Activated CD4-positive, alpha-beta T cell treated with anti-CD3 and anti-CD28 coated beads, Interleukin-2, amount 10 ng/mL, durations not matched to agents 24 days and 14 days (primary cell): ENCODE measurements at regions of chr6 and their contacts with region 1.

Region 1: GRCh38 chr6:13336553-13336952 is 8.2 kb upstream of the TBC1D7 start:
- DNase-seq: peak; percentile 93
- H3K4me3 Mint-ChIP-seq: no peak overlapping the region
- H3K27ac Mint-ChIP-seq: no peak overlapping the region
- H3K4me1 Mint-ChIP-seq: peaks cover 34% of the 10 kb centered on the region
- H3K27me3 Mint-ChIP-seq: no peaks in the 10 kb centered on the region

Region 2: DNA sequence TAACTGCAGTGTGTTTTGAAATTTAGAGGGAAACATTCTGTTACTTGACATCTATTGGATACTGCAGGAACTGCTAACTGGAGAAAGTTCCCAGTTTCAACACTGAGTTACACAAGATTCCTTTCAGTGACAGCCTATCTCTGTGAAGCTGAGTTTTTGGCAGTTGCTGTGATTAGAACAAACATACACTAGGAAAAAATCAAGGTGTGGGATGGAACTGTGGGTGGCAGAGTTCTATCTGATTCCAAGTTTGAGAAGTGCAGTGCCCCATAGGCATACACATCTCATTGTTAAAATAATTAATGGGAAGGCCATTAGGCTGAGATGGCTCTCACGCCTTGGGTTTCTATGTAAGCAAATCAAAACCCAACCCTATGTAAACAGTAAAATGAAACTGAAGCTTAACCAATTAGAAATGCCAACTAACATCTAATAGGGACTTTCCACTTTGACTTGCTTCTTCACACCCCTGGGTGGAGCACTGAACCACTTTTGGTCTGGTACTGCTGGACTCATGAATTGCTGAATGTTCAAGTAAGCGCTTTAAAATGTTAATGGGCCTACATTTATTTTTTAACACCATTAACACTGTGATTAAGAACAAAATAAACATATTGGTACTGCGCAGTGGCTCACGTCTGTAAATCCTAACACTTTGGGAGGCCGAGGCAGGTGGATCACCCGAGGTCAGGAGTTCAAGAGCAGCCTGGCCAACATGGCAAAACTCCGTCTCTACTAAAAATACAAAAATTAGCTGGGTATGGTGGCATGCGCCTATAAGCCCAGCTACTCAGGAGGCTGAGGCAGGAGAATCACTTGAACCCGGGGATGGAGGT is 47.0 kb after region 1 on chr6:
- intact Hi-C with region 1: loop called (anchors 5 kb)
- DNase-seq: peak; percentile 73
- H3K4me3 Mint-ChIP-seq: peak overlapping the region; percentile 19
- H3K27ac Mint-ChIP-seq: no peak overlapping the region
- H3K4me1 Mint-ChIP-seq: peaks cover 18% of the 10 kb centered on the region
- H3K27me3 Mint-ChIP-seq: no peaks in the 10 kb centered on the region

Region 3: DNA sequence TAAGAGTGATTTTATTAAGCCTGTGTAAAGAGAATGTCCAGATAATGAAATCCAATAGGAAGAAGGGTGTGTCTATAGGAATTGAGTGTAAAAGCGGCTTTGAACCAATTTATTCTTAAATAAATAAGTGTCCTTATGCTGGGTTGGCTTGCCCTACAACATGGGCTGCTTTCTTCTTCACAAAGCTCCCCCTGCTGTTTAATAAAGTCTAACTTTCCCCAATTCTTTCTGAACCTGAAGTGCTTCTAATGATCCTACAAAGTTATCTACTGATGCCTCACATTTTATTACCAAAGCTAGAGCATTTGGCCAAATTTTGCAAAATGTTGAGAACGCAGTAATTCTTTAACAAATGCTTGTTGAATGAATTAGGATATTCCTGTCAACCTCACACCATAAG is 201.5 kb after region 1 on chr6:
- intact Hi-C with region 1: loop called (anchors 1 kb)
- DNase-seq: no peak
- H3K4me3 Mint-ChIP-seq: no peak overlapping the region
- H3K27ac Mint-ChIP-seq: no peak overlapping the region
- H3K4me1 Mint-ChIP-seq: no peaks in the 10 kb centered on the region
- H3K27me3 Mint-ChIP-seq: peaks cover 4% of the 10 kb centered on the region